Left lung (tissue), 14 donors: ENCODE measurements at regions of chr16 and their contacts with region 1.

Region 1: DNA sequence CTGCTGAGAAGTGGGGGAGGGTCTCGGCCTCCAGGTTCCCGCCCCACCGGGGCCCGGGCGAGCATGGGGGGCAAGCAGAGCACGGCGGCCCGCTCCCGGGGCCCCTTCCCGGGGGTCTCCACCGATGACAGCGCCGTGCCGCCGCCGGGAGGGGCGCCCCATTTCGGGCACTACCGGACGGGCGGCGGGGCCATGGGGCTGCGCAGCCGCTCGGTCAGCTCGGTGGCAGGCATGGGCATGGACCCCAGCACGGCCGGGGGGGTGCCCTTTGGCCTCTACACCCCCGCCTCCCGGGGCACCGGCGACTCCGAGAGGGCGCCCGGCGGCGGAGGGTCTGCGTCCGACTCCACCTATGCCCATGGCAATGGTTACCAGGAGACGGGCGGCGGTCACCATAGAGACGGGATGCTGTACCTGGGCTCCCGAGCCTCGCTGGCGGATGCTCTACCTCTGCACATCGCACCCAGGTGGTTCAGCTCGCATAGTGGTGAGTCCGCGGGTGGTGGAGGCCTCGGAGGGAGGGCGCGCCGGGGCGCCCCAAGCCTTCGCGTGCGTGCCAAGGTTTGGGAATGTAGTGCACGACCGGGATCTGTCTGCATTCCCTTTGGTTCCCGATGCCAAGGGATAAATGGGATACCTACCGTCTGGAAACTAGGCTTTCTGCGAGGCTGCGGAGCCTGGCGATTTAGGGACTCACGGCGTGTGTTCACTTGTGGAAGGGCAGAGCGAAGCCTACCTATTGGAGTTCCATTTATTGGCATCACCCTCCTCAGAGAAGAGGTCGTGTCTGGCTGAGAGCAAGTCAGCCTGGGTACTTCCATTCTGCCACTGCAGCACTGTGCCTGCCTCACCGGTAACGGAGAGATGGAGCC is 1.0 kb downstream of the ZNRF1 start:
- DNase-seq: peak; percentile 36 to 84 (median 49)
- ATAC-seq: peak; percentile 22
- H3K4me3 ChIP-seq: peak overlapping the region; percentile 71 to 92
- H3K27ac ChIP-seq: peak overlapping the region; percentile 78 to 79
- H3K4me1 ChIP-seq: peaks cover 3 to 46% of the 10 kb centered on the region in 2 donors
- H3K27me3 ChIP-seq: peaks cover 0 to 15% of the 10 kb centered on the region in 2 donors
- CTCF ChIP-seq: no peak

Region 2: DNA sequence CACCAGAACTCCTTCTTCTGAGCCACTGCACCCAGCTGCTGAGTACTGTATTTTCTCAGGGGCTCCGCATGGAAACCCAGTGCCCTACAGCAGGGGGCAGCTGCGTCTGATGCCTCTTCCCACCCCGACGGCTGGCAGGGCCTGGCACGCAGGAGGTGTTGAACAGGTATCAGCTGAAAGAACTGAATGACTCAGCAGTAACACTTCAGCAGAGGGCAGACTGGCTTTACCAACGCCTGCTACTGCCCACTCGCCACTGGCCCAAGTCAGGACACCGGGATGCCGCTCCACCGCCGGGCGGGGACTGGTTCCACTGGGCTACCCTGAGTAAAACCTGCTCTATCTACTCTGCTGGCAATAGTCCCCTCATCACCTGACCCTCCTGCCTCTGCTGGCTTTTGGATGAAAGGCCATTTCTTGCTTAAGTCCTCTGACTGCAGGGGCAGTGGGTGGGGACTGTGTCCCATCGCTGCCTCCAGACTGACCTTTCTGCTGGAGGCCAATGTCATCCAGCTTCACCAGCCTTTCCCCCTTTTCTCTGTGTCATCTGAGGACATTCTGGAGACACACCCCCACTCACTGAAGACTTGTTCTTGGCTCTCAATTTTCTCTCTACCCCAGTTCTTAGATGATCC is 124.8 kb before region 1 on chr16:
- intact Hi-C with region 1: no loop called
- DNase-seq: no peak
- ATAC-seq: no peak
- H3K4me3 ChIP-seq: no peak overlapping the region
- H3K27ac ChIP-seq: no peak overlapping the region
- H3K4me1 ChIP-seq: no peaks in the 10 kb centered on the region
- H3K27me3 ChIP-seq: no peaks in the 10 kb centered on the region
- CTCF ChIP-seq: no peak

Region 3: GRCh38 chr16:75108792-75109734 is 109.2 kb after region 1 on chr16:
- intact Hi-C with region 1: loop called (anchors 2 to 10 kb)
- DNase-seq: peak in 3 of 4 donors; percentile 80 to 94 (median 90)
- ATAC-seq: peak; percentile 70
- H3K4me3 ChIP-seq: no peak overlapping the region
- H3K27ac ChIP-seq: peak overlapping the region; percentile 66 to 74
- H3K4me1 ChIP-seq: peaks cover 34 to 86% of the 10 kb centered on the region in 2 donors
- H3K27me3 ChIP-seq: peaks cover 0 to 11% of the 10 kb centered on the region in 2 donors
- CTCF ChIP-seq: no peak